IMR-90 (cell line): ENCODE measurements at regions of chr17 and their contacts with region 1.

Region 1: GRCh38 chr17:78013683-78014467 is 55.4 kb downstream of the TNRC6C start:
- DNase-seq: peak; percentile 77
- ATAC-seq: peak; percentile 81
- H3K4me3 ChIP-seq: no peak overlapping the region
- H3K27ac ChIP-seq: no peak overlapping the region
- H3K4me1 ChIP-seq: no peaks in the 10 kb centered on the region
- H3K27me3 ChIP-seq: no peaks in the 10 kb centered on the region
- CTCF ChIP-seq: peak; percentile 92
- POLR2A ChIP-seq: no peak
- RAD21 ChIP-seq: peak; percentile 86

Region 2: DNA sequence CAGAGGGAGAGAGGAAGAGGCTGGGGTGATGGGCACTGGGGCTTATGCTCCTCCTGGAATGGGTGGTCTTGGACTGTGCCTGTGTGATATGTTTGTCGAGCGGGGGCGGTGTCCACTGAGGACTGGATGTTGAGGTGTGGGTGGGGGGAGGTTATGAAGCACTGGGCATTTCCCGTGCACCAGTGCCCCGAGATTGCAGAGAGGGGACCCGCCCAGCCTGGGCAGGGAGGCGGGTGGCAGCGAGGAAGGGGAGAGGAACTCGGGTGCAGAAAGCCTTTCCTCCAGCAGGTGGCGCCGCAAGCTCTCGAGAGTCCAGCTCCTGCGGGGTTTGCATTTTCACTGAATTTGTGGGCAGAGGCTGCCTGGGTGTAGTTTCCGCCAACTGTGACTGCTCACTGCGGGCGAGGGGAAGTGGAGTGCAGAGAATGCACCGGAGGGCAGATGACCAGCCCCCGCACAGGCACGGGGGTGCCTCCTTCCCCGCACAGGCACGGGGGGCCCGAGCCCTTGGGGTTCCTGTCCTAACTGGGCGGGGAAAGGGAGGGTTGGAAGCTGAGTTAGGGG is 682.5 kb before region 1 on chr17:
- CTCF ChIA-PET with region 1: no interaction called
- POLR2A ChIA-PET with region 1: no interaction called
- dilution Hi-C with region 1: no loop called
- in situ Hi-C with region 1: no loop called
- intact Hi-C with region 1: loop called (anchors 10 kb)
- DNase-seq: peak; percentile 87
- ATAC-seq: peak; percentile 95
- H3K4me3 ChIP-seq: no peak overlapping the region
- H3K27ac ChIP-seq: peak overlapping the region; percentile 71
- H3K4me1 ChIP-seq: peaks cover 3% of the 10 kb centered on the region
- H3K27me3 ChIP-seq: no peaks in the 10 kb centered on the region
- CTCF ChIP-seq: peak; percentile 96
- POLR2A ChIP-seq: peak; percentile 45; the same call in 1 of the 2 replicates
- RAD21 ChIP-seq: peak; percentile 99

Region 3: DNA sequence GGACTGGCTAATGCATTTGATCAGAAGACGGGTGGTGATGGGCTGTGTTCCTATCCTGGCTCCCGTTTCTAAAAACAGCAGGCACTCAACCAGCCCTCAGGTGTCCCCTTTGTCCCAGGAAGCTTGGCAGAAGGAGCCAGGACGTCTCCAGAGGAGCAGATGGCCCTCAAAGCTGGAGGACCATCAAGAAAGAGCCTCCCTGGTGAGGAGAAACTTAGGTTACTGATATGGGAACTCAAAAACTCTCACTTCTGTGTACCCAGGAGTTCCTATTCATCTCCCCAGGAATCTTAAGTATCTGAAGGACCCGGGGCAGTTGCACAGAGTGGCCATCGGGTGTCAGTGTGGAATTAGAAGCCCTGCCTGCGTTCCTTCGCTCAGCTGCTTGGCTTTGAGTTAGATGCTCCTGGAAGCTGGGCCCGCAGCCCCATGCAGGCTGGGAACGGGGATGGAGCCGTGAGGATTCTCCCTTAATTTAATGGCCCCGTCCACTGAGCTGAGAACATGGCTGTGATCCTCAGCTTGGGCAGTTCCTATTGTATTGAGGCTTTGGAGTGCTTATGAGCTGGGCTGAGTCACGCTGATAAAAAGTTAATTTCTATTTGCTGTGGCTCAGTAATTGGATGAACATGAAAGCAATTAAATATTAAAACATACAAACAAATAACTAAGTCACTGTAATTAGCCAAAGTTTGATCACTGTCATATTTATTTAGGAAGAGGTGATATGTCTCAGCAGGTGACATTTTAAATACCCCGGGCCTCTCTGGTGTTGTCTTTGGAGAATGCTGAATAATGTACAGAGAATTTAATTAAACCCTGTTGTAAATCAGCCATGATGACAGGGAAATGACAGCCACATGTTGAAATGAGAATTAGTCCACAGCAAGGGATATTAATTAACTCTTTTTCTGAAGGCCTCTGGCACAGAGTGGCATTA is 471.1 kb before region 1 on chr17:
- CTCF ChIA-PET with region 1: interaction called, 31 read pairs
- POLR2A ChIA-PET with region 1: no interaction called
- dilution Hi-C with region 1: no loop called
- in situ Hi-C with region 1: loop called (anchors 5 kb)
- intact Hi-C with region 1: loop called (anchors 1 kb)
- DNase-seq: peak; percentile 78
- ATAC-seq: peak; percentile 99
- H3K4me3 ChIP-seq: no peak overlapping the region
- H3K27ac ChIP-seq: no peak overlapping the region
- H3K4me1 ChIP-seq: no peaks in the 10 kb centered on the region
- H3K27me3 ChIP-seq: peaks cover 44% of the 10 kb centered on the region
- CTCF ChIP-seq: peak; percentile 96
- POLR2A ChIP-seq: no peak
- RAD21 ChIP-seq: peak; percentile 93

Region 4: GRCh38 chr17:77734341-77735080 is 279.4 kb before region 1 on chr17:
- CTCF ChIA-PET with region 1: no interaction called
- POLR2A ChIA-PET with region 1: no interaction called
- dilution Hi-C with region 1: no loop called
- in situ Hi-C with region 1: no loop called
- intact Hi-C with region 1: loop called (anchors 10 kb)
- DNase-seq: peak; percentile 16
- ATAC-seq: peak; percentile 64
- H3K4me3 ChIP-seq: no peak overlapping the region
- H3K27ac ChIP-seq: no peak overlapping the region
- H3K4me1 ChIP-seq: peaks cover 7% of the 10 kb centered on the region; the same call in 1 of the 2 replicates
- H3K27me3 ChIP-seq: peaks cover 32% of the 10 kb centered on the region
- CTCF ChIP-seq: no peak
- POLR2A ChIP-seq: no peak
- RAD21 ChIP-seq: no peak

Region 5: DNA sequence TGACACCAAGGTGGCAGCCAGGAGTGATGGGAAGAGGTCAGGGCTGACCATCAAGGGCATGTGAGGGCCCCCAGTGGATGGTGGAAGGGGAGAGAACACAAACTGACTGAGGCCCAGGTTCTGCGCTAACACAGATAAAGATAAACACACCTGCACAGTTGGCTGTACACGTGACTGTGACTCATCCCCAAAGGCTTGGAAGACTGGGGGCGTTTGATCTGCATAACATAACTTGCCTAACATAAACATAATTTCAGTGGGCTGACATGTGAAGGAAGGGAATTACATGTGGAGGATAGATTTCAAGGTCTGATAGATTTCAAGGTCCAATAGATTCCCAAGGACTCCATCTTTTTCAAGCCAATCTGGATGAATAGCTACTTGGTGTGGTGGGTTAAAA is 156.3 kb before region 1 on chr17:
- CTCF ChIA-PET with region 1: no interaction called
- POLR2A ChIA-PET with region 1: no interaction called
- dilution Hi-C with region 1: no loop called
- in situ Hi-C with region 1: no loop called
- intact Hi-C with region 1: no loop called
- DNase-seq: peak; percentile 26
- ATAC-seq: no peak
- H3K4me3 ChIP-seq: no peak overlapping the region
- H3K27ac ChIP-seq: no peak overlapping the region
- H3K4me1 ChIP-seq: no peaks in the 10 kb centered on the region
- H3K27me3 ChIP-seq: peaks cover 19% of the 10 kb centered on the region
- CTCF ChIP-seq: no peak
- POLR2A ChIP-seq: no peak
- RAD21 ChIP-seq: no peak

Region 6: DNA sequence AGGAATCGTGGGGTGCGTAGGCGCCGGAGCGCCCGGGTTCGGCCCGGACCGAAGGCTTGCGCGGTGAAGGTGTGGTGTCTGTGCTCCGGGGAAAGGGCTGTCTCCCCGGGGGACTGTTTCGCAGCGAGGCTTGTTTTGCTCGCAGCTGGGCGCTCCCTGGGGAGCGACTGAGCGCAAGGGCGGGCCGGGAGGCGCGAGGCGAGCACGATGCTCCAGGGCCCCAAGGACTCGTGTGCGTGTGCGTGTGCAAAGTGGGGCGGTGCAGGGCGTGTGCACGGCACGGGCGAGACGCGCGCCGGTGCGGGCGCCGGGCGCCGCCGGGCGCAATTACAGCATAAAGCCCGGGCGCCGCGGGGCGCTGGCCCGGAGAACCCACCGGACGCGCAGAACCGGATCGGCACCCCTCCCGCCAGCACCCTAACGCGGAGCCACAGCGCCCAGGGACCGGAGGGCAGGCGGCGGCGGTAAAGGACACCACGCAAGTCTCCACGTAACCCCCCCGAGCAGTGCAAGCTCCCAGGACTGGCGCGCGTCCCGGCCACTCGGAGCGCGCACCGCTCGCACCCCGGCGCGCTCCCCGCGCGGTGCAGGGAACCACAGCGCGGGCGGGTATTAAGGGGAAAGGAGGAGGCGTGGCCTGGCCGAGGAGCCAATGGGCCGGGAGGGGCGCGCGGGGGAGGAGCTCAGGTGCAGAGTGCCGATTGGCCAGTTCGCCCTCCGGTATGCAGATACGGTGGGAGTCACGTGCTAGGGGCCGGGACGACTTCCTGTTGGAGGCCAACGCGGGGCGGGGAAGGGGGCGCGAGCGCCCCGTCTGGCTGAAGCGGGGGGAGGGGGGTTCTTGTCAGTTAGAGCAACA is 55.8 kb before region 1 on chr17 and contains the start of gene TNRC6C:
- CTCF ChIA-PET with region 1: interaction called, 8 read pairs
- POLR2A ChIA-PET with region 1: interaction called, 12 read pairs
- dilution Hi-C with region 1: no loop called
- in situ Hi-C with region 1: no loop called
- intact Hi-C with region 1: loop called (anchors 2 kb)
- DNase-seq: peak; percentile 99
- ATAC-seq: peak; percentile 94
- H3K4me3 ChIP-seq: peak within 1 kb of the TSS; percentile 70
- H3K27ac ChIP-seq: no peak within 1 kb of the TSS; the same call in 1 of the 2 replicates
- H3K4me1 ChIP-seq: no peaks in the 10 kb centered on the region; the same call in 1 of the 2 replicates
- H3K27me3 ChIP-seq: peaks cover 38% of the 10 kb centered on the region
- CTCF ChIP-seq: peak; percentile 17; the same call in 1 of the 2 replicates
- POLR2A ChIP-seq: peak; percentile 100
- RAD21 ChIP-seq: no peak
- total RNA-seq, gene TNRC6C: 2.7 and 3.6 TPM in 2 replicates

Region 7: DNA sequence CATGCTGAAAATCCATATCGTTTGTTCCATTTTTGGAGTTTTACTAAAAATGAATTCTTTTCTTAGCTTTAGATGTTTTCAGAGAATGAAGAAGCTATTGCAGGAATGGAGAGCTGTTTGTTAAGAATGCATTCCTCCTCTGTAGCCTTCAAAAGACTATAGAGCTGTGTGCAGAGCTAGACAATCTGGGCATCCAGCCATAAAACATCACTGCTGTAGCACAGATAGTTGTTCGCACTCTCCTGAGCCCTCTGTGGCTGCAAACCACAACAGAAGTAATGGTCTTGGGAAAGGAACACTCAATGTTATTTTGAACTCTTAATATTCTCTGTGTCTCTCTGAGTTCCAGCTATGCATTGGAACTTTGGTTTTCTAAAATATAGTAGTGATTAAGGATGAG is 50.4 kb before region 1 on chr17:
- CTCF ChIA-PET with region 1: interaction called, 8 read pairs
- POLR2A ChIA-PET with region 1: interaction called, 12 read pairs
- dilution Hi-C with region 1: no loop called
- in situ Hi-C with region 1: no loop called
- intact Hi-C with region 1: loop called (anchors 2 kb)
- DNase-seq: peak; percentile 93
- ATAC-seq: peak; percentile 55
- H3K4me3 ChIP-seq: no peak overlapping the region
- H3K27ac ChIP-seq: no peak overlapping the region
- H3K4me1 ChIP-seq: no peaks in the 10 kb centered on the region; the same call in 1 of the 2 replicates
- H3K27me3 ChIP-seq: no peaks in the 10 kb centered on the region
- CTCF ChIP-seq: no peak
- POLR2A ChIP-seq: no peak
- RAD21 ChIP-seq: no peak